Esophagus muscularis mucosa (tissue), 4 donors: ENCODE measurements at regions of chr2 and their contacts with region 1.

Region 1: DNA sequence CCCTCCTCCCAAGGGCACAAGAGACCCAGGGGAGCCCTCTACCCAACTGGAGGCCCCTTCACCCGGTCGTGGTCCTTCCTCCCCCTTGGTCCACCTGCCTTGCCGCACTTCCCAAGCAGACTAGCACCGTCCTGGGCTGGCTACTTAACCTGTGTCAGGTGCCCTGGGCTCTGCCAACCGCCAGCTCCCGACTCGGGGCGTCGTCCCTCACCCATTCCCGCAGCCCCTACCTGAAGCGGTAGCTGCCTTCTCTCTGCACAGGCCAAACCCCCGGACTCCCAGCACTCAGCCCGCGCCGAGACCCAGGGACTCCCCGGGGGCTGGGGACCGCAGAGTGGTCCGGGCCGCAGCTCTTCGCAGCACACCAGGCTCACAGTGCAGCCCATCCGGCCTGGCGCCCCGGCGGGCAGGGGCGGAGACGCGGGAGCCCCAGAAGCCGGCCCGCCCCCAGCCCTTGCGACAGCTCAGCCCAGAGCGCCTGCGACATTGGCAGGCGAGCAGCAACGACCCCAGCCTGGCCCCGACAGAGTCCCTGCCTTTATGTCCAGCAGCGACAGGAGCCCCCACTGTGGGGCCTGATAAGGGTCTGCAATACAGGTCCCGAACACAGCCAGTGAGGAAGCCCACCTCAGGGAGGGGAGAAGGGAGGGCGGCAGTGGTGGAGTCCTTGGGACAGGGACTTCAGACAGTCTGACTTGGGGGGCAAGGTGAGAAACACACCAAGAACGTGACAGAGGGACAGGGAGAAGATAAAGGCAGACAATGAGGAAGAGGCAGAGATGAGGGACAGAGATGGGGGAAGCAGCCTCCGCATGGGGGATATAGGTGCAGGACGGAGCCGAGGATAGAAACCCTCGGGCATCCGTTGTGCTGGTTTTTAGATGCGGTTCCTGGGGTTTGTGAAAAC is 31.0 kb upstream of the TNS1 start:
- DNase-seq: peak; percentile 74
- H3K4me3 ChIP-seq: peak overlapping the region in 1 of 4 donors; percentile 21
- H3K27ac ChIP-seq: no peak overlapping the region
- H3K4me1 ChIP-seq: peaks cover 6 to 16% (median 10%) of the 10 kb centered on the region in 4 donors
- H3K27me3 ChIP-seq: peaks cover 0 to 14% (median 0%) of the 10 kb centered on the region in 4 donors
- CTCF ChIP-seq: no peak
- EP300 ChIP-seq: no peak
- POLR2A ChIP-seq: no peak

Region 2: GRCh38 chr2:217785544-217786045 is 248.2 kb before region 1 on chr2:
- intact Hi-C with region 1: loop called (anchors 5 kb)
- DNase-seq: peak; percentile 97
- H3K4me3 ChIP-seq: no peak overlapping the region
- H3K27ac ChIP-seq: peak overlapping the region; percentile 45 to 65 (median 60)
- H3K4me1 ChIP-seq: peaks cover 10 to 35% (median 20%) of the 10 kb centered on the region in 4 donors
- H3K27me3 ChIP-seq: no peaks in the 10 kb centered on the region
- CTCF ChIP-seq: peak; percentile 96 to 99 (median 96)
- EP300 ChIP-seq: no peak
- POLR2A ChIP-seq: no peak

Region 3: GRCh38 chr2:217886720-217887309 is 147.0 kb before region 1 on chr2:
- intact Hi-C with region 1: loop called (anchors 5 kb)
- DNase-seq: no peak
- H3K4me3 ChIP-seq: no peak overlapping the region
- H3K27ac ChIP-seq: peak overlapping the region; percentile 89 to 98 (median 97)
- H3K4me1 ChIP-seq: peaks cover 58 to 88% (median 83%) of the 10 kb centered on the region in 4 donors
- H3K27me3 ChIP-seq: no peaks in the 10 kb centered on the region
- CTCF ChIP-seq: peak; percentile 73 to 79 (median 75)
- EP300 ChIP-seq: no peak
- POLR2A ChIP-seq: no peak

Region 4: DNA sequence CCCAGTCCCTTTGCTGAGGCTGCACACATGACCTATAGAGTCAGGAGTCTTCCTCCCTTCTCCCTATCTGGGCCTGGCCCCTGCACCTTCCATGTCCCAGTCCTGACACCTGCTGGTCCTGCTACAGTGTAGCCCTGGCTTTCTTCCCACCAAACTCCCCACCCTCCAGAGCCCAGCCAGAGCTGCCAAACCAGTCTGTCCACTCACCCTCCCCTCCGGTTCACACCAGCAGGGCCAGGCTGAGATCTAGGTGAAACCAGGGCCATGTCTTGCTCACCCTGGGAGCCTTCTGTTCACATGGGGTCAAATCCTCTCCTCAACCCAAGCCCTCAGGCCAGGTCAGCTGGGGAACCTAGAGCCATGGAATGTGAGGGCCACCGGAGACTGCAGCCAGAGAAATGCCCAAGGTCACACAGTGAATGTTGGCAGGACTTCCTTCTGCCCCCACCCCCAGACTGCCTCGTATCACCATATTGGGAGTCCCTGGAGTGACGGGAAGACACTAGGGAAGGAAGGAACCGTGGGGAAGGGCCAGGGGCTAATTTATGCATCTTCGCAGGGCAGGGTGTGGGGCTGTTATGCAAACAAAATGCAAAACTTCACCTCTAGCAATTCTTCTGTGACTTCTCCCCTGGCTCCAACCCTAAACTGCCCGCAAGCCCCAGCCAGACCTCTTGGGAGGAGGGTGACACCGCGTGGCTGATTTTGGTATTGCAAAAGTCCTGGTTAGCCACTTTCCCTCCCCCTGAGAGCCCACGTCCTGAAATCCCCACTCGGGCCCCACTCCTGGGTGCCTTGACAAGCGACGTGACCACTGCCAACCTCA is 45.6 kb before region 1 on chr2:
- intact Hi-C with region 1: no loop called
- DNase-seq: peak; percentile 98
- H3K4me3 ChIP-seq: peak overlapping the region; percentile 15 to 37 (median 24)
- H3K27ac ChIP-seq: peak overlapping the region; percentile 70 to 77 (median 72)
- H3K4me1 ChIP-seq: peaks cover 29 to 44% (median 36%) of the 10 kb centered on the region in 4 donors
- H3K27me3 ChIP-seq: no peaks in the 10 kb centered on the region
- CTCF ChIP-seq: peak; percentile 86 to 96 (median 91)
- EP300 ChIP-seq: no peak
- POLR2A ChIP-seq: no peak

Region 5: DNA sequence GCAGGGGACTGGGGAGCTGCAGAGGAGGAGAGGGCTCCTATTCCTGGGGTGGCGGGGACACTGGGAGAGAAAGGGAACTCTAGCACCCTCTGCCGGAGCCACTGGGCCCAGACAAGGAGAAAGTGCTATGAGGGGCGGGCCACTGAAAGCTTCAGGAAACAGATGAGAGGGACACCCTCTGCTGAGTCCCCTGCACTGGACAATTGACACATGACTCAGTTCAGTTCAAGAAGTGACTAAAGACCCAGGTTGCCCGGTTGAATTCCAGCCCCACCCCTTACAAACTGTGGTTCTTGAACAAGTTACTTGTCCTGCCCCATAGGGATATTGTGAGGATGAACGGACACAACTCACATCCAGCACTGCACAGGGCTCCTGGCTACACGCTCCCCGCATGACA is 40.2 kb after region 1 on chr2:
- intact Hi-C with region 1: no loop called
- DNase-seq: peak; percentile 90
- H3K4me3 ChIP-seq: no peak overlapping the region
- H3K27ac ChIP-seq: no peak overlapping the region
- H3K4me1 ChIP-seq: peaks cover 0 to 3% (median 3%) of the 10 kb centered on the region in 4 donors
- H3K27me3 ChIP-seq: peaks cover 0 to 5% (median 0%) of the 10 kb centered on the region in 4 donors
- CTCF ChIP-seq: peak in 2 of 3 experiments; percentile 16 to 28
- EP300 ChIP-seq: no peak
- POLR2A ChIP-seq: no peak